ENCODE measurements at regions of chr16 and their contacts with region 1.

Region 1: DNA sequence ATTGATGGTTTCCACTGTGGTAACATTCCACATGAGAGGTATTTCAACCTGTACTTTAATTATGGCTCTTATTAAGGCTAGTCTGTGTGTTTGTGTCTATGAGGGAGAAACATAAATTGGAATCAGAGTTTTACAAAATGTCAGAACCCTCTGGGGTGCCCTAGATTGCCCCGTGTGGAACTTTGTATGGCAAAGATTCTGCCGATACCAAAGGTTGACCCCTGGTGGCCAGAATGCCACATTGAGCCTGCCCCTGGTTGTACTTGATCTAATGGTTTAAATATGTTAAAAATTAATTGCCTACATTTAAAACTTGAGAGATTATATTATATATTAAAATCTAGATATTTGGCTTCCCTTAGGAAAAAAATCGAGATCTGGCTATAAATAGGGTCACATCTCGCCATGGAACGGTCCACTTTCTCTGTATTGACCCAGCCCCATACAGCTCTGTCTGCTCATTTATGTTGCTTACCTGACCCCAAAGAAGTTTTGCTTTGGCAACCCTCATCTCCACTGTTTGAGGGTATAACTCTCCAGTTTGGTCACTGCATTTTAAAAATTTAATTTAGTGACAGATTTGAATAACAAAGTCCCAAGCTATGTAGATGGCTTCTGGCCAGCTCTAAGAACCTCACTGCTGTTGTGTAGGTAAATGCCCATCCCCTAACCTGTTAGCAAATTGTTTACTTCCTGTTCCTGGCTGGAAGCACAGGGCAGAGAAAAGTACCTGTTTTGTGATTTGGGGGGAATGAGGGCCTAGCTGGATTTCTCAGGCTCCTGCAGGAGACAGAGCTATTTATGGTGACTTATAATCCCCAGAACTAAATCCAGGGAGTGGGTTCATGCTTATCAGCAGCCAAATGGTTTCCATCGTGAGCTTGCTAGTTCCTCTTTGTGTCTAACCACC is 95.0 kb downstream of the PLCG2 start:
- DNase-seq: peak; percentile 78 to 86 (median 84)
- H3K4me3 ChIP-seq: no peak overlapping the region
- H3K27ac ChIP-seq: no peak overlapping the region
- H3K4me1 ChIP-seq: peaks cover 5 to 18% (median 11%) of the 10 kb centered on the region in 4 experiments
- H3K27me3 ChIP-seq: no peaks in the 10 kb centered on the region

Region 2: DNA sequence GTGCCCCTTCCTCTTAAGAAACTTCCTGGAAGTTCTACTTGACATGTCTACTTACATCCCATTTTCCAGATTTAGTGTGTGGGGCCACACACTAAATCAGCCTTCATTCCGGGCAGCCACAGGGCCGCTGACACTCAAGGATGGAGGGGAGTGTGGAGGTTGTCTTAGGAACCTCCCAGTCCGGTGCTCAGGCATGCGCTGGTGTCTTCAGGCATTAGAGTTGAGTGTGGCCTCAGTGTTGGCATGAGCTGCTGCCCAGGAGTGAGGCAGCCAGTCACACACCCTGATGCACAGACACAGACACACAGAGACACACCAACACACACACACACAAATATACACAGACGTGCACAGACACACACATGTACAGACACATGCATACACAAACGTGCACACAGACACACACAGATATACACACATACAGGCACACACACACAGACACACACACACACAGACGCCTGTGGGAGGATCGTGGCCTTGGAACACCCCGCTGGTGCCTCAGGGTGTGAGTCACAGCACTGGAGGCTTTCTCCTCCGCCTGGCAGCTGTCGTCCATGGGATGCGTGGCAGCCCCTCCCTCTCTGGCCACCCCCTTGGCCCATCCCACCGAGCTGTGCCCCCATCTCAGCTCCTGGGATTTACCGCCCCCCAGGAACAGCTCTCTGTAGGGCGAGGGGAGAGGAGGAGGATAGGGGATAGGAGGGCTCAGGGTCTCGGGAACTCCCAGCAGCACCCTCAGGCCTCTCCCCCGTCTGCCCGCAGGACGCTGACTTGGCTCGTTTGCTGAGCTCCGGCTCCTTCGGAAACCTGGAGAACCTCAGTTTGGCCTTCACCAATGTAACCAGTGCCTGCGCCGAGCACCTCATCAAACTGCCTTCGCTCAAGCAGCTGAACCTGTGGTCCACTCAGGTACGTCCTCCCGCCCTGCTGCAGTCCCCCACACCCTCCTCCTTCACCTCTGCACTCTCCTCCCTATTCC is 170.6 kb before region 1 on chr16:
- CTCF ChIA-PET with region 1: no interaction called
- POLR2A ChIA-PET with region 1: no interaction called
- DNase-seq: peak in 2 of 3 donors; percentile 57 to 62
- H3K4me3 ChIP-seq: no peak overlapping the region
- H3K27ac ChIP-seq: no peak overlapping the region
- H3K4me1 ChIP-seq: no peaks in the 10 kb centered on the region
- H3K27me3 ChIP-seq: no peaks in the 10 kb centered on the region

Region 3: DNA sequence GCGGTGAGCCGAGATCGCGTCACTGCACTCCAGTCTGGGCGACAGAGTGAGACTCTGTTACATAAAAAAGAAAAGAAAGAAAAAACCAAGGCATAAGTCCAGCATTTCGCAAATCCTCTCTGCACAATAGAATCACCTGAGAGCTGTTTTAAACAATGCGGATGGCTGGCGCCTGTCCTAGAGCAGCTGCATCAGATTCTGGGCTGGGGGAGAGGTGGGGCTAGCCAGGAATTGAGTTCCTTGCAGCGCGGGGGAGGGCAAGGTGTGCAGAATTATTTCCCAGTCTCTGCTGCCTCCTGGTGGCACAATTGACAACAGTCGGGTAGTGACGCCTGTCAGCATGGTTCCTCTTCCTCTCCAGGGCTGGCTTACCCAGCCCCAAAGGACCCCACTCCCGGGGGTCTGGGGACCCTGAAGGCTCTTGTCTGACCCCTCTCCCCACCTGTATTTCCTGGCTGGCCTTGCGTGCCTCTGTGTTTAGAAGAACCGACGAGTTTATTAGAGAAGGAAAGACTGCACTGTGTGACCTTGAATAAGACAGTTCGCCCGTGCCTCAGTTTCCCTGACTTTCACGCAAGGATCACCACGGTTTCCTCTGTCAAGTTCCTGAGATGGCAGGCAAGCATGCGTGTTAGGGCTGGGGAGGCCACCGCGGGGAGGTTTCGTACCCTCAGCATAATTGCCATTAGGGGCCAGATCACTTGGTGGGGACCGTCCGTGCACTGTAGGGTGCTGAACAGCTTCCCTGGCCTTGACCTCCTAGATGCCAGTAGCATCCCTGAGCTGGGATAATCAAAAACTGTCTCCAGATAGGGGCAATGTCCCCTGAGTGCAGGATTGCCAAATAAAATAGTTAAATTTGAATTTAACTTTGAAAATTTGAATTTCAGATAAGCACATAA is 136.0 kb before region 1 on chr16:
- CTCF ChIA-PET with region 1: interaction called, 16 read pairs
- POLR2A ChIA-PET with region 1: no interaction called
- DNase-seq: peak; percentile 82 to 89 (median 85)
- H3K4me3 ChIP-seq: peak overlapping the region in 6 of 7 experiments; percentile 10 to 74 (median 55)
- H3K27ac ChIP-seq: peak overlapping the region in 1 of 2 experiments; percentile 8
- H3K4me1 ChIP-seq: peaks cover 15 to 50% (median 37%) of the 10 kb centered on the region in 4 experiments
- H3K27me3 ChIP-seq: no peaks in the 10 kb centered on the region

Region 4: GRCh38 chr16:81752225-81752875 is 121.7 kb before region 1 on chr16:
- CTCF ChIA-PET with region 1: interaction called, 25 read pairs
- POLR2A ChIA-PET with region 1: no interaction called
- DNase-seq: peak; percentile 88 to 97 (median 96)
- H3K4me3 ChIP-seq: peak overlapping the region in 3 of 7 experiments; percentile 2 to 48 (median 22)
- H3K27ac ChIP-seq: peak overlapping the region in 1 of 2 experiments; percentile 78
- H3K4me1 ChIP-seq: peaks cover 19 to 88% (median 72%) of the 10 kb centered on the region in 4 experiments
- H3K27me3 ChIP-seq: no peaks in the 10 kb centered on the region

Region 5: DNA sequence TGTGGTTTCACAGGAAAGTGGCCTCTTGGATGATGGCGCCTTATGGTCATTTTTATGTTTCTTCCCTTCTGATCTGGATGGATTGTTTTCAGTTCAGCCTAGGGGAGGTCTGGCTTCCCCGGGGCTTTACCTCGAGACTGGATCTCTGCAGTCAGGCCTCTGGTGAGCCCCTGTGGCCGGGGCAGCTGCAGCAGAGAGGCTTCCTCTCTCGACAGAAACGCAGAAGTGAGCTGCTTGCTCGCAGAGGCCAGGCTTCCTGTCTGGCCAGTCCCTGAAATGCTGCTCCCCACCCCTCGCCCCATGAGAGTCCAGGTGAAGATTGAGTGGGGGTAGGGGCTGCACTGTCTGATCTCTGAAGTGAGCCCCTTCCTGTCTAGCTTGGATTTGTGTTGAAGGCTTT is 51.0 kb before region 1 on chr16:
- CTCF ChIA-PET with region 1: interaction called, 16 read pairs
- POLR2A ChIA-PET with region 1: interaction called, 3 read pairs
- DNase-seq: peak; percentile 61 to 94 (median 90)
- H3K4me3 ChIP-seq: peak overlapping the region in 4 of 7 experiments; percentile 19 to 44 (median 24)
- H3K27ac ChIP-seq: peak overlapping the region; percentile 17 to 62
- H3K4me1 ChIP-seq: peaks cover 7 to 95% (median 37%) of the 10 kb centered on the region in 4 experiments
- H3K27me3 ChIP-seq: no peaks in the 10 kb centered on the region

Region 6: GRCh38 chr16:81855552-81856153 is 18.4 kb before region 1 on chr16:
- CTCF ChIA-PET with region 1: interaction called, 11 read pairs
- POLR2A ChIA-PET with region 1: no interaction called
- DNase-seq: peak in 1 of 3 donors; percentile 48
- H3K4me3 ChIP-seq: no peak overlapping the region
- H3K27ac ChIP-seq: no peak overlapping the region
- H3K4me1 ChIP-seq: peaks cover 0 to 4% (median 0%) of the 10 kb centered on the region in 4 experiments
- H3K27me3 ChIP-seq: no peaks in the 10 kb centered on the region